ENCODE measurements at regions of chr18 and their contacts with region 1.

Region 1: DNA sequence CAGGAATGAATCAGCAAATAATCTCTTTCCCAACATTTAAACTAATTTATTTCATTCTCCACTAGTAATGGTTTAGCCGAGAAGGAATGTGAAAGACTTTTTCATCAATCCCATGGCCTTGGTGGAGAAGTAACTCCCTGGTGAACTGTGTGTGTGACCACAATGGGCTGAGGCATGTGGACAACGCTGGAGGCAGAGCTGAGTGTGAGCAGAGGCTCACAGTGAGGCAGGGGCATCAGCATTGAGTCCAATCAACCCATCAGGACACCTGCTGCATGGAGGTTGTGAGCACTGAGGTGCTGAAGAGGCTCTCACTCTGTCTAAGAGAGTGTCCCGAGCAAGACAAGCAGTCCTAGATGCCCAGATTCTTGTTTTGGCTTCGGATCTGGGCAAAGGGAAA is 78.6 kb downstream of the ZNF519 start:
- DNase-seq: no peak
- ATAC-seq: no peak
- H3K4me3 ChIP-seq: no peak overlapping the region
- H3K27ac ChIP-seq: no peak overlapping the region
- H3K4me1 ChIP-seq: no peaks in the 10 kb centered on the region
- H3K27me3 ChIP-seq: no peaks in the 10 kb centered on the region
- CTCF ChIP-seq: no peak
- EP300 ChIP-seq: no peak
- POLR2A ChIP-seq: no peak
- RAD21 ChIP-seq: no peak

Region 2: GRCh38 chr18:13999231-13999630 is 54.4 kb before region 1 on chr18:
- CTCF ChIA-PET with region 1: no interaction called
- POLR2A ChIA-PET with region 1: no interaction called
- in situ Hi-C with region 1: no loop called
- intact Hi-C with region 1: no loop called
- DNase-seq: no peak
- ATAC-seq: no peak
- H3K4me3 ChIP-seq: no peak overlapping the region
- H3K27ac ChIP-seq: no peak overlapping the region
- H3K4me1 ChIP-seq: no peaks in the 10 kb centered on the region
- H3K27me3 ChIP-seq: no peaks in the 10 kb centered on the region
- CTCF ChIP-seq: no peak
- EP300 ChIP-seq: no peak
- POLR2A ChIP-seq: no peak
- RAD21 ChIP-seq: no peak

Region 3: GRCh38 chr18:14117606-14118005 is 63.9 kb after region 1 on chr18:
- CTCF ChIA-PET with region 1: no interaction called
- POLR2A ChIA-PET with region 1: no interaction called
- in situ Hi-C with region 1: no loop called
- intact Hi-C with region 1: loop called (anchors 10 kb)
- DNase-seq: no peak
- ATAC-seq: no peak
- H3K4me3 ChIP-seq: no peak overlapping the region
- H3K27ac ChIP-seq: no peak overlapping the region
- H3K4me1 ChIP-seq: no peaks in the 10 kb centered on the region
- H3K27me3 ChIP-seq: no peaks in the 10 kb centered on the region
- CTCF ChIP-seq: no peak
- EP300 ChIP-seq: no peak
- POLR2A ChIP-seq: no peak
- RAD21 ChIP-seq: no peak

Measured in K562 (cell line).